ENCODE measurements at regions of chr11 and their contacts with region 1.

Region 1: GRCh38 chr11:120108154-120108865 is 29.6 kb downstream of the TRIM29 start:
- DNase-seq: peak; percentile 95
- H3K4me3 ChIP-seq: peak overlapping the region in 1 of 2 experiments; percentile 24; a peak in 1 of 4 replicates
- H3K27ac ChIP-seq: peak overlapping the region in 1 of 2 experiments; percentile 56; a peak in 2 of 4 replicates
- H3K4me1 ChIP-seq: peaks cover 0 to 43% of the 10 kb centered on the region in 2 experiments; a peak in 1 of 4 replicates
- H3K27me3 ChIP-seq: peaks cover 17% of the 10 kb centered on the region; the same call in 1 of the 2 replicates
- CTCF ChIP-seq: peak; percentile 98
- EP300 ChIP-seq: no peak
- RAD21 ChIP-seq: peak; percentile 99

Region 2: GRCh38 chr11:119624102-119624615 is 484.2 kb before region 1 on chr11:
- CTCF ChIA-PET with region 1: interaction called, 12 read pairs
- POLR2A ChIA-PET with region 1: no interaction called
- DNase-seq: peak; percentile 87
- H3K4me3 ChIP-seq: no peak overlapping the region; a peak in 1 of 4 replicates
- H3K27ac ChIP-seq: no peak overlapping the region
- H3K4me1 ChIP-seq: peaks cover 0 to 14% of the 10 kb centered on the region in 2 experiments; a peak in 1 of 4 replicates
- H3K27me3 ChIP-seq: no peaks in the 10 kb centered on the region
- CTCF ChIP-seq: peak; percentile 56
- EP300 ChIP-seq: no peak
- RAD21 ChIP-seq: no peak; the same call in 1 of the 2 replicates

Region 3: DNA sequence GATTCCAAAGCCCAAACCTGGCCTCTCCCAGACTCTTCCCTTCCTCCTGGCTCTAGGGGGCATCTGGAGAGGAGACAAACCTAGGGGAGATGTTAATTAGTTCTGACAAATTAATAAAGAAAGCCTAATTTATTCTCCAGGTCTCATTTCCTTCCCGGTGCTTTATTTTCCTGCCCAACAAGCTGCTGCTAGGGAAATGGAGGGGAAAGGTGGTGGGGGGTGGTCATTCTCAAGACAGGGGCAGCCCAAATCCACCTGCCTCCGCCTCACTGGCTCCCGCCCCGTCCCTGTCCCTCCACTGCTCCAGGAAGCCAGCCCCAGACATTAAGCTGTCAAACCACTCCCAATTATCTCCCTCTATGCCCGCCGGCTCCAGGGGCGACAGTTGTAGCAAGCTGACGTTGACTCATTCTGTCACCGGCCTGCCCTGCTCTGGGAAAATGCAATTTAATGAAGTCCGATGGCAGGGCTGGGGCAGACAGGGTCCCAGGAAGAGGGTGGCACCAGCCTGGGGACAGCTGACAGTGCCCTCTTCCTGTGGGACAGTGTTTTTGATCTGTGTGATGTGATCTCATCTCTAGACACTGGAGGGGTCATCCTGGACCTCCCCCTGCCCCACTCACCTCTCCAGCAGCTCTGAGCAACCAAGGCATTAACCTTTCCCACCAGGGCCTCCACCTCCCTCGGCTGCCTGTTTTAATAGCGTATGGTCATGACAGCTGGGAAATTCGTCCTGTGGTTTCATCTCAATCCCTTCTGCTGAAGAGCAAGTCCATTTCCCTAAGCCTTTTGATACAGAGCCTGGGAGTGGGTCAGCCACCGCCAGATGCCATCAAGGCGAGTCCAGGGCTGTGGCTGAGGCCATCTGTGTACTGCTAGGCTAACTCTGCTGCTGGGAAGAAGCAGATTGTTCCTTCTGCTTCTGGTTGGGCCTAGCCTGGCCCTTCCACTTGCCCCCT is 406.4 kb before region 1 on chr11:
- CTCF ChIA-PET with region 1: interaction called, 12 read pairs
- POLR2A ChIA-PET with region 1: no interaction called
- DNase-seq: peak; percentile 88
- H3K4me3 ChIP-seq: no peak overlapping the region
- H3K27ac ChIP-seq: peak overlapping the region; percentile 30 to 96
- H3K4me1 ChIP-seq: peaks cover 4 to 89% of the 10 kb centered on the region in 2 experiments; a peak in 2 of 4 replicates
- H3K27me3 ChIP-seq: no peaks in the 10 kb centered on the region
- CTCF ChIP-seq: no peak
- EP300 ChIP-seq: peak in 1 of 2 experiments; percentile 71; a peak in 2 of 4 replicates
- RAD21 ChIP-seq: peak; percentile 37

Region 4: DNA sequence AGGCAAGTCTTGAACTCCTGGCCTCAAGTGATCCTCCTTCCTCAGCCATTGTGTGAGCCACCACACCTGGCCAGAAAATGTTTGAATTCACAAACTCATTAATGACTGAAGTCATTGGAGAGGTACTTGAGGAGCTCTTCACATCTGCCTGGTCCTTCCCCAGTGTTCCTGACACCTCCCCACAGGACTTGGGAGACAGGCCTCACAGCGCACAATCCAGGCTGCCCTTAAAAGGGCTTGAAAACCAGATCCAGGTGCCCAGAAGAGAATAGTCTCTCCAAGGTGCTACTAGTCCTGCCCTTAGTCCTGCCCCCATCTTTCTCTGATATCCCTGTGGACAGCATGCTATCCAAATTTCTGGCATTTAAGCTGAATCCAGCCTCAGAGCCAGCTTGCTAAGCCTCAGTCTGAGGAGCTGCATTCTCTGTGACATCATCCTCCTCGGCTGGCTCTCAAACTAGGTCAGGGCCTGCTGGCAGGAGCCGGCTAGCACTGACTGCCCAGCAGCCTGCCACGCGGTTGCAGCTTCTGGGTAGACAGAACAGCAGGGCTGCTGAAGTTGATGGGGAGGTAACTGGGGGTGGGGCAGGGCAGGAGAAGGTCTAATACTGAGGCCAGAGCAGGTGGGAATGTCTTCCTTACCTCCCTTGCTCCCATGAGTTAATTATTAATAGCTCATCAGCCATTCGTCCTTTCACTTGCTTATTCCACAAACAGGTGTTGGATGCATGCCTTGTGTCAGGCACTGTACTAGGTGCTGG is 344.0 kb before region 1 on chr11:
- CTCF ChIA-PET with region 1: interaction called, 45 read pairs
- POLR2A ChIA-PET with region 1: no interaction called
- DNase-seq: no peak
- H3K4me3 ChIP-seq: no peak overlapping the region
- H3K27ac ChIP-seq: peak overlapping the region in 1 of 2 experiments; percentile 17; a peak in 2 of 4 replicates
- H3K4me1 ChIP-seq: peaks cover 0 to 20% of the 10 kb centered on the region in 2 experiments; a peak in 1 of 4 replicates
- H3K27me3 ChIP-seq: no peaks in the 10 kb centered on the region; the same call in 1 of the 2 replicates
- CTCF ChIP-seq: no peak
- EP300 ChIP-seq: no peak
- RAD21 ChIP-seq: no peak

Region 5: GRCh38 chr11:119907878-119908572 is 200.3 kb before region 1 on chr11:
- CTCF ChIA-PET with region 1: interaction called, 83 read pairs
- POLR2A ChIA-PET with region 1: interaction called, 12 read pairs
- DNase-seq: peak; percentile 86
- H3K4me3 ChIP-seq: no peak overlapping the region
- H3K27ac ChIP-seq: peak overlapping the region in 1 of 2 experiments; percentile 99; a peak in 2 of 4 replicates
- H3K4me1 ChIP-seq: peaks cover 0 to 74% of the 10 kb centered on the region in 2 experiments; a peak in 2 of 4 replicates
- H3K27me3 ChIP-seq: peaks cover 16% of the 10 kb centered on the region; the same call in 1 of the 2 replicates
- CTCF ChIP-seq: no peak
- EP300 ChIP-seq: peak in 1 of 2 experiments; percentile 94; a peak in 1 of 4 replicates
- RAD21 ChIP-seq: peak; percentile 57

Region 6: GRCh38 chr11:120096369-120097191 is 11.7 kb before region 1 on chr11:
- CTCF ChIA-PET with region 1: interaction called, 33 read pairs
- POLR2A ChIA-PET with region 1: no interaction called
- DNase-seq: peak; percentile 47
- H3K4me3 ChIP-seq: no peak overlapping the region
- H3K27ac ChIP-seq: no peak overlapping the region
- H3K4me1 ChIP-seq: peaks cover 0 to 44% of the 10 kb centered on the region in 2 experiments; a peak in 1 of 4 replicates
- H3K27me3 ChIP-seq: no peaks in the 10 kb centered on the region; the same call in 1 of the 2 replicates
- CTCF ChIP-seq: no peak
- EP300 ChIP-seq: no peak
- RAD21 ChIP-seq: no peak

Region 7: GRCh38 chr11:120912504-120912903 is 804.2 kb after region 1 on chr11:
- CTCF ChIA-PET with region 1: no interaction called
- POLR2A ChIA-PET with region 1: no interaction called
- DNase-seq: peak; percentile 51
- H3K4me3 ChIP-seq: no peak overlapping the region
- H3K27ac ChIP-seq: no peak overlapping the region
- H3K4me1 ChIP-seq: peaks cover 0 to 3% of the 10 kb centered on the region in 2 experiments; a peak in 1 of 4 replicates
- H3K27me3 ChIP-seq: no peaks in the 10 kb centered on the region
- CTCF ChIP-seq: 0 out of 2 replicates have a peak, but pooled peaks have one; percentile 20
- EP300 ChIP-seq: no peak
- RAD21 ChIP-seq: peak; percentile 43